ENCODE measurements at regions of chr17 and their contacts with region 1.

Region 1: DNA sequence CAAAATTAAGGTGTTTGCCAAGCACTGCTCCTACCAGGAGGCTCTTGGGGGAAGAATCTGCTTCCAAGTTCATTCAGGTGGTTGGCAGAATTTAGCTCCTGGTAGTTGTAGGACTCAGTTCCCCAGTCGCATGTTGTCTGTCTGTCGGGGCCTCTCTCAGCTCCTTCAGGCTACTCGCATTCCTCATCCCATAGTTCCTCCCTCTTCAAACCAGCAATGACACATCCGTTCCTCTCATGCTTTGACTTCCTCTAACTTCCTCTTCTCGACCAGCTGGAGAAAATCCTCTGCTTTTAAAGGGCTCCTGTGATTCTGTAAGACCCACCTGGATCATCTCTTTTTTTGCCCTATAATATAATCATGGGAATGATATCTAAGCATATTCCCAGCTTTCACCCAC is 108.1 kb downstream of the PMP22 start:
- DNase-seq: no peak
- H3K4me3 ChIP-seq: no peak overlapping the region
- H3K27me3 ChIP-seq: no peaks in the 10 kb centered on the region
- CTCF ChIP-seq: no peak

Region 2: GRCh38 chr17:14926526-14927122 is 230.4 kb before region 1 on chr17:
- CTCF ChIA-PET with region 1: interaction called, 16 read pairs
- POLR2A ChIA-PET with region 1: no interaction called
- DNase-seq: no peak
- H3K4me3 ChIP-seq: no peak overlapping the region
- H3K27me3 ChIP-seq: no peaks in the 10 kb centered on the region; the same call in 1 of the 2 replicates
- CTCF ChIP-seq: peak; percentile 70

Region 3: GRCh38 chr17:15171167-15172047 is 14.4 kb after region 1 on chr17:
- CTCF ChIA-PET with region 1: interaction called, 11 read pairs
- POLR2A ChIA-PET with region 1: no interaction called
- DNase-seq: peak; percentile 21
- H3K4me3 ChIP-seq: no peak overlapping the region
- H3K27me3 ChIP-seq: no peaks in the 10 kb centered on the region; the same call in 1 of the 2 replicates
- CTCF ChIP-seq: peak; percentile 98

Region 4: DNA sequence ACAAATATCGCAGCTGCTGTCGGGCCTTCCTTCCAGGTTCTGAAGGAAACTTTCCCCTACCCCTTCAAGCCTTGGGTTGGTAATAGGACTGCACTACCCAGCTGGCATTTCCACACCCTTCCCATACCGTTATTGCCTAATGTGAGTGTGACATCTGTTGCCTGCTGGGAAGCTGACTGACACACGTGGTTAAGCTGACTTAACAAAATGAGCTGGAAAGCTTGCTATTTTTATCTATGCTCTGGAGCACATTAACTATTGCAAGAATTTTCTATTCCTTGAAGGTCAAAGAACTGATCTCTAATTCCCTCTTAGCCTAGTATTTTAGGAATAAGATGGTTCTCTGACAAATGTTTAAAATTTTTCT is 28.6 kb after region 1 on chr17:
- CTCF ChIA-PET with region 1: no interaction called
- POLR2A ChIA-PET with region 1: no interaction called
- DNase-seq: peak; percentile 52
- H3K4me3 ChIP-seq: no peak overlapping the region
- H3K27me3 ChIP-seq: no peaks in the 10 kb centered on the region; the same call in 1 of the 2 replicates
- CTCF ChIP-seq: no peak

Measured in BJ (cell line).